MCF 10A (cell line): ENCODE measurements at regions of chr11 and their contacts with region 1.

Region 1: DNA sequence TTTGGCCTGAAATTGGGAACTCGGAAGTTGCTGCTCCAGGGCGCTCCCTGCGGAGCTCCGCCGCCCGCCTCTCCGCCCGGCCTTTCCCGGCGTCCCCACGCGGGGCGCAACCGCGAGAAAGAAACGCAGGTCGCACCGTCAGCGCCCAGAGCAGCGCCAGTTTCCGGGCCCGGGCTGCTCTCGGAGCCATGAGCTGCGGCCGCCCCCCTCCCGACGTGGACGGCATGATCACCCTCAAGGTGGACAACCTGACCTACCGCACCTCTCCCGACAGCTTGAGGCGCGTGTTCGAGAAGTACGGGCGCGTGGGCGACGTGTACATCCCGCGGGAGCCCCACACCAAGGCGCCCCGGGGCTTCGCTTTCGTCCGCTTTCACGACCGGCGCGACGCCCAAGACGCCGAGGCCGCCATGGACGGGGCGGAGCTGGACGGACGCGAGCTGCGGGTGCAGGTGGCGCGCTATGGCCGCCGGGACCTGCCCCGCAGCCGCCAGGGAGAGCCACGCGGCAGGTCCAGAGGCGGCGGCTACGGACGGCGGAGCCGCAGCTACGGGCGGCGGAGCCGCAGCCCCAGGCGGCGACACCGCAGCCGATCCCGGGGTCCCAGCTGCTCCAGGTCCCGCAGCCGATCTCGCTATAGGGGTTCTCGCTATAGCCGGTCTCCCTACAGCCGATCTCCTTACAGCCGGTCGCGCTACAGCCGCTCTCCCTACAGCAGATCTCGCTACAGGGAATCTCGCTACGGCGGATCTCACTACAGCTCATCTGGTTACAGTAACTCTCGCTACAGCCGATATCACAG is 521 bp downstream of the SRSF8 start:
- DNase-seq: peak; percentile 67
- H3K4me3 Mint-ChIP-seq: peak overlapping the region; percentile 99
- H3K27ac Mint-ChIP-seq: peak overlapping the region; percentile 95
- H3K4me1 Mint-ChIP-seq: peaks cover 15% of the 10 kb centered on the region
- H3K27me3 Mint-ChIP-seq: no peaks in the 10 kb centered on the region
- CTCF ChIP-seq: peak; percentile 50

Region 2: DNA sequence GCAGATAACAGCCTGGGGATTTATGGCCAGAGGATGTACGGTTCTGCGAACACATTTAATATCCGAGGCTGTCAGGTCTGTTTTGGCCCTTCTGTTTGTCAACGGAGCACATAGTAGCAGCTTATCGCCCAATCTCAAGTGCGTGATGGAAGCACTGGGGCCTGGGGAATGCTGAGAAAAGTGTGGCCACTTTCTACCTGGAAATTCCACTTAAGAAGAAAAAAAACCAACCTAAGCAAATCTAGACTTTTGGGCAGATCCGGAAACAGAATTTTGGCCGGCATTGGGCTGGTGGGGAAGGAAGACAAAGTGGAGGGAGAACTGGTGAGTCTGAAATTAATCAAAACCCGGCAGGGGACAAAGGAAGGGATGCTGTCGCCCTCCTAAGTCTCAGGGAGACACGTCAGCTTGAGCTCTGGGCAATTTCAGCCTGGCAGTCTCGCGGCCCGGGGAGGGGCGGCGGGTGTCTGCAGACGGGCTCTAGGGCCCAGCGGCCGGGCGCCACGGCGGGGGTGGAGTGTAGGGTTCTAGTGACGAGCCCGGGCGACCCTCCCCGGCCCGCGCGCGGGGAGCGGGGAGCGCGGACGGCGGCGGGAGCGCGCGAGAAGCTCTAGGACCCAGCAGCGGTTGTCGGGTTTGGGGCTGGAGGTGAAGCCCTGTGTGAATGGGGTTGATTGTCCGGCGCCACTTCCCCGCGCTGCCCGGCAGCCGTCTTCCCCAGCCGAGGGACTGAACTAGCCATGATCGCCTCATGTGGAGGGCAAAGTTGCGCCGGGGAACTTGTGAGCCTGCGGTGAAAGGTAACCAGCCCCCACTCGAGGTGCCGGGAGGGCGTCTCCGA is 299.3 kb before region 1 on chr11 and contains the start of gene AMOTL1:
- CTCF ChIA-PET with region 1: no interaction called
- POLR2A ChIA-PET with region 1: interaction called, 11 read pairs
- intact Hi-C with region 1: no loop called
- DNase-seq: peak; percentile 83
- H3K4me3 Mint-ChIP-seq: peak within 1 kb of the TSS; percentile 89
- H3K27ac Mint-ChIP-seq: peak within 1 kb of the TSS; percentile 90
- H3K4me1 Mint-ChIP-seq: peaks cover 32% of the 10 kb centered on the region
- H3K27me3 Mint-ChIP-seq: no peaks in the 10 kb centered on the region
- CTCF ChIP-seq: no peak
- total RNA-seq, gene AMOTL1: 76.6 and 77.0 TPM in 2 replicates

Region 3: DNA sequence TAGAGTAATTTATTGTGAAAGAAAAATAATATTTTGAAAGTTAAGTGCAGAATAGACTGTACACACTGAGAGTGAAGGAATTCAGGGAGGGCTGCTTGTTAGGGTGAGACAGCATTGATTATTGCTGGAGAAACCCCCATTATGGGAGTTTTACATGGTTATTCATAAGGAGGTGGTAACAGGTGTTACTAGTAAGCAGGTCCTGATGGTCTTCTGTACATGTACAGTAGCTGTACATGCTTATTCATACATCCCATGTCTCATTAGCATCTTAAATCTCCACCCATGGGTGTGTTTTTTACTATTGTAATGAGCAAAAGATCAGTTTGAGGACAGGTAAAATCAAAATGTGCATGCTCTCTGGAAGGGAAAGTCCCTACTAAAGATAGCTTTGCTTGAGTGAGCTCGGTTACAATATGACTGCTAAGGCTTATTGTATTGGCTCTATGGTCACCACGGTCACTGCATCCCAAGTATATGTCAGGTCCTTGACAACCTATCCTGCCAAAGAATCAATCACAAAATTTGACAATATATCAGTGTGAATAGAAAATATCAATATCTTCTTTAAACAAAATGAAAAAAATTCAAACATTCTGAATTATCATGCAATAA is 11.8 kb before region 1 on chr11:
- CTCF ChIA-PET with region 1: interaction called, 12 read pairs
- POLR2A ChIA-PET with region 1: interaction called, 13 read pairs
- intact Hi-C with region 1: no loop called
- DNase-seq: no peak
- H3K4me3 Mint-ChIP-seq: no peak overlapping the region
- H3K27ac Mint-ChIP-seq: no peak overlapping the region
- H3K4me1 Mint-ChIP-seq: no peaks in the 10 kb centered on the region
- H3K27me3 Mint-ChIP-seq: no peaks in the 10 kb centered on the region
- CTCF ChIP-seq: no peak

Region 4: DNA sequence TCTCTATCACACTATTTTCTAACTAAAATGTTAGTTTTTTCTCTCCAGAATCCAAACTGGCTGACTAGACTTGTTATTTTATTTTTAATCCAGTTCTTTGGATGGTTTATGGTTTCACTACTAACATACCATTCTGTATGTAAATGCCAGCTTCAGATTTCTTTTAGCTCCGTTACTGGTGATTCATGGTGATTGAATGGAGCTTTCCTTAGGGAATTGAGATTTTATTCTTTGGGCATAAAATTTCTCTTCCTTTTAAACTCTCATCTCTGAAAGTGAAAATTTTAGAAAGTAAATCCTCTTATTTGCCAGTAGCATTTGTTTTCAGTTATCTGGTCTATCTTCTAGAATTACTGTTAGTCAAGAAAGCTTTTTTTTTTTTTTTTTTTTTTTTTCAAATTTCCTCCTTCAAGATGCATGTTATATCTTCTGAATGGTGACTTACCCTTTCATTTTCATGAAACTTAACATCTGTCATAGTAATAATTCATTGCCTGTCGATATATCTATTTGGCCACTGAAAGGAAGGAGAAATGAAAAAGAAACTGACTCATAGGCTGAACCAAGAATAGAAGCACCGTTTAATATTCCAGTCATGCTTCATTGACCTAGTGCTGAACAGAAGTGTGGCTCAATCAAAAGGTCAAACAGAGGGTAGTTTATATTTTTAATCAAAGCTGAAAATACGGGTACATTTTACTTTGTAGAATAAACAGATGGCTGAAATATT is 28.8 kb after region 1 on chr11:
- CTCF ChIA-PET with region 1: interaction called, 50 read pairs
- POLR2A ChIA-PET with region 1: interaction called, 242 read pairs
- intact Hi-C with region 1: no loop called
- DNase-seq: peak; percentile 35
- H3K4me3 Mint-ChIP-seq: no peak overlapping the region
- H3K27ac Mint-ChIP-seq: peak overlapping the region; percentile 37
- H3K4me1 Mint-ChIP-seq: peaks cover 31% of the 10 kb centered on the region
- H3K27me3 Mint-ChIP-seq: no peaks in the 10 kb centered on the region
- CTCF ChIP-seq: no peak

Region 5: GRCh38 chr11:95150946-95151684 is 83.9 kb after region 1 on chr11:
- CTCF ChIA-PET with region 1: interaction called, 60 read pairs
- POLR2A ChIA-PET with region 1: interaction called, 190 read pairs
- intact Hi-C with region 1: loop called (anchors 1 kb)
- DNase-seq: peak; percentile 95
- H3K4me3 Mint-ChIP-seq: peak overlapping the region; percentile 81
- H3K27ac Mint-ChIP-seq: peak overlapping the region; percentile 82
- H3K4me1 Mint-ChIP-seq: peaks cover 44% of the 10 kb centered on the region
- H3K27me3 Mint-ChIP-seq: no peaks in the 10 kb centered on the region
- CTCF ChIP-seq: peak; percentile 63

Region 6: DNA sequence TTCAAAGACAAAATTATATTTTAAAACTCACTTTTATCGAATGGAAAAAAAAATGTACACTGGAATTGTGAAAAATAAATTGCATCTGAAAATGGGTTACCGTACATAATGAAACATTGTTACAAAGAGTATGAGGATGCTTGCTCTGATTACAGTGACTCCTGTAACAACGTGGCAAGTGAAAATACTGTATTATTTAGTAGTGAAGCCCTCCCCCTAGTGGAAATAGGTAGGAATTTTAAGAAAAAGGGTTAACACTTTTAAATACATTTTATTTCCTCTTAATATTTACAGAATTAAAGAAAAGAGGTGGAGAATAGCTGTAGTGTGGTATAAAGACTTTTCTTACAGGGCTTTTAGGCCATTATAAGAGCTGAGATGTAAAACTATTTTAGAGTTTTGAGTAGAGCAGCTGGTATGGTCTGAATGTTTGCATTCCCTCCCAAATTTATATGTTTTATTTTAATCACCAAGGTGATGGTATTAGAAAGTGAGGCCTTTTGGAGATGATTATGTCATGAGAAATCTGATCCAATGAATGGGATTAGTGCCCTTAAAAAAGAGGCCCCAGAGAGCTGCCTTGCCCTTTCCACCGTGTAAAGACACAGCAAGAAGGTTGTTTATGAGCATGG is 697.1 kb after region 1 on chr11:
- CTCF ChIA-PET with region 1: interaction called, 9 read pairs
- POLR2A ChIA-PET with region 1: interaction called, 8 read pairs
- intact Hi-C with region 1: loop called (anchors 2 kb)
- DNase-seq: peak; percentile 54
- H3K4me3 Mint-ChIP-seq: no peak overlapping the region
- H3K27ac Mint-ChIP-seq: no peak overlapping the region
- H3K4me1 Mint-ChIP-seq: peaks cover 10% of the 10 kb centered on the region
- H3K27me3 Mint-ChIP-seq: no peaks in the 10 kb centered on the region
- CTCF ChIP-seq: peak; percentile 61